Activated naive CD4-positive, alpha-beta T cell treated with anti-CD3 and anti-CD28 coated beads, Interleukin-2, amount 10 ng/mL, durations not matched to agents 7 days and 5 days (primary cell): ENCODE measurements at regions of chr14 and their contacts with region 1.

Region 1: DNA sequence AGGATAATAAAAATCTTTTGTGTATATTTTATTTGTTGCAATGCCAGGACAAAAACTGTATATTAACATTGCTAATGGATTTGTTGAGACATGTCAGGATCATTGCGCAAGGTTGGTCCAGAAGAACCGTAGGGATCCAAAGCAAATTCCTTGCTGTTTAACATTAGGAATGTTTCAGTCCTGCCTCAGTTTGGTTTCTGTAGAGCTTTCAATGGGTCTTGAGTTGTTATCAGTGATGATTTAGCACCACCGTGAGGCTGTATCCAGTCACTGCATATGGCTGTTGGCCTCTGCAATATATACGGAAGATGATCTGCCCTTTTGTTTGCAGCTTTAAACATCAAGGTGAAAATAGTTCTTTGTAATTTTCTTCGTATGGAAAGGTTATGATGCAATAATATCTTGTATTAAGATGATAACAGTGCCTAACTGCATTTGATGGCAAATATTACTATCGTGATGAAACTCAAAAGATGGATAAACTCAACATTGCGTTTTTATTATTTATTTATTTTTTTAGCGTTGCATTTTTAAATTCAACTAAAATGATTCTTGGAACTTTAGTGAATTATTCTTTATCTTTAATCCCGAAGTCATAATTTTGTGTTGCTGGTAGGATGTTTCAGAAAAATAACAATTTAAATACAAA is 231.2 kb downstream of the AKAP6 start:
- DNase-seq: peak; percentile 54
- H3K4me3 Mint-ChIP-seq: no peak overlapping the region
- H3K27ac Mint-ChIP-seq: no peak overlapping the region
- H3K4me1 Mint-ChIP-seq: peaks cover 14% of the 10 kb centered on the region
- H3K27me3 Mint-ChIP-seq: no peaks in the 10 kb centered on the region

Region 2: GRCh38 chr14:32259368-32260013 is 300.8 kb before region 1 on chr14:
- CTCF ChIA-PET with region 1: interaction called, 16 read pairs
- DNase-seq: no peak
- H3K4me3 Mint-ChIP-seq: no peak overlapping the region
- H3K27ac Mint-ChIP-seq: peak overlapping the region; percentile 30
- H3K4me1 Mint-ChIP-seq: peaks cover 18% of the 10 kb centered on the region
- H3K27me3 Mint-ChIP-seq: no peaks in the 10 kb centered on the region

Region 3: GRCh38 chr14:32576088-32576795 is 15.9 kb after region 1 on chr14:
- CTCF ChIA-PET with region 1: interaction called, 20 read pairs
- DNase-seq: peak; percentile 49
- H3K4me3 Mint-ChIP-seq: no peak overlapping the region
- H3K27ac Mint-ChIP-seq: no peak overlapping the region
- H3K4me1 Mint-ChIP-seq: no peaks in the 10 kb centered on the region
- H3K27me3 Mint-ChIP-seq: peaks cover 3% of the 10 kb centered on the region